Endothelial cell of umbilical vein (primary cell): ENCODE measurements at regions of chr11 and their contacts with region 1.

Region 1: GRCh38 chr11:47355283-47356128 is 3.0 kb upstream of the MYBPC3 start:
- DNase-seq: peak; percentile 92
- H3K4me3 ChIP-seq: peak overlapping the region in 1 of 3 experiments; percentile 12
- H3K27ac ChIP-seq: no peak overlapping the region
- H3K4me1 ChIP-seq: no peaks in the 10 kb centered on the region
- H3K27me3 ChIP-seq: no peaks in the 10 kb centered on the region
- CTCF ChIP-seq: peak; percentile 97 to 100
- POLR2A ChIP-seq: no peak

Region 2: DNA sequence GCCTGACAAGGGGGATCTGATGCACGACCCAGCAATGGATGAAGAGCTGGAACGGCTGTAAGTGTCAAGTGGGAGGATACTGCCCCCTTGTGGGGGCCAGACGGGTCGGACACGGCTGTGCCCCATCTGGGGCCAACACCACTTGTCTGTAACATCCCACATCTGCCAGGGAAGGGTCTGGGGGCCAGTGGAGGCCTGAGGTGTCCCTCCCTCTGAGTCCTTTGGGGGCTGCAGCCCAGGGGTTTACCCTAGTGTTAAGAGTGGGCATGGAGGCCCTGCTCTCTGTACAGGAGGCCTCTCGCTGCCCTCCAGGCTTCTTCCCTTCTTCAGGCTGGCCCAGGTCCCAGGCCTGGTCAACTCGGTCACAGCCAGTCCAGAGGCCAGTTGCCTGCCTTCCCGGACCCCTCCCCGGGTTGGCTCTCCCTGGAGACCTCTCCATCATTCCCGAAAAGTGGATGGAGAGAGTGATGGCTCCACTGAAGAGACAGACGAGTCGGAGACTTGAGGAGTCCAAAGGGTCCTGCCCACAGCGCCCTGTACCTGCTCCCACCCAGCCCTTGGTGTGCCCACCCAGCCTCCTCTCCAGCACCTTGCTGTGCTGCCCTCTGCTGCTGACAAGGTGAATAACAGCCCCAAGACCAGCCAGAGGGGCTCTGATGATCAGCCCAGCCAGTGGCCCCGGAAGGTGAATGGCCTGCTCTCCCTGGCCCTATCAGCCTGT is 194.2 kb before region 1 on chr11:
- CTCF ChIA-PET with region 1: interaction called, 7 read pairs
- POLR2A ChIA-PET with region 1: no interaction called
- dilution Hi-C with region 1: no loop called
- intact Hi-C with region 1: loop called (anchors 1 kb)
- DNase-seq: peak; percentile 52
- H3K4me3 ChIP-seq: no peak overlapping the region
- H3K27ac ChIP-seq: no peak overlapping the region
- H3K4me1 ChIP-seq: no peaks in the 10 kb centered on the region
- H3K27me3 ChIP-seq: no peaks in the 10 kb centered on the region
- CTCF ChIP-seq: peak; percentile 80 to 87
- POLR2A ChIP-seq: no peak

Region 3: GRCh38 chr11:47186076-47186936 is 169.2 kb before region 1 on chr11 and contains the start of gene PACSIN3:
- CTCF ChIA-PET with region 1: interaction called, 10 read pairs
- POLR2A ChIA-PET with region 1: no interaction called
- dilution Hi-C with region 1: no loop called
- intact Hi-C with region 1: no loop called
- DNase-seq: peak; percentile 60
- H3K4me3 ChIP-seq: peak within 1 kb of the TSS; percentile 65 to 76 (median 67)
- H3K27ac ChIP-seq: no peak within 1 kb of the TSS
- H3K4me1 ChIP-seq: peaks cover 16% of the 10 kb centered on the region
- H3K27me3 ChIP-seq: peaks cover 0 to 3% of the 10 kb centered on the region in 2 experiments
- CTCF ChIP-seq: peak in 1 of 2 donors; percentile 4
- POLR2A ChIP-seq: peak; percentile 39
- total RNA-seq, gene PACSIN3: 27.2 and 29.0 TPM in 2 replicates

Region 4: DNA sequence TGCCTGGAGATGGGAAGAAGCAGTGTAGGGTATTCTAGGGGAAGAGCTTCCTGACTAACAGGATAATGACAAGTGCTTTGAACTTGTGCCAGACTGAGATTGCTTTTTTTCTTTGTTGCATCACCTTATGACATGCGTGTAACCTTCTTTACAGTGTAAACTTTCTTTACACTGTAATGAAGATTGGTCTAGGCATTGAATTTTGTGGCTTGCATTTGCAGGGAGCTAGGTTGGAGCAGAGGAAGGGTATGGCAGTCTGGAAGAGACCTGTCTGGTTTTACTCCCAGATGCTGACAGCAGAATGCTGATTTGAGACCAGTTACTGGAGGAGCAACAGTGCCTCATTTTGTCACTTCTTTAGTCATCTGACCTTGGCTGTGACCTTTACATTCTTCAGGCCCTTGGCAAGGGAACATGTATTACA is 135.1 kb before region 1 on chr11:
- CTCF ChIA-PET with region 1: interaction called, 11 read pairs
- POLR2A ChIA-PET with region 1: no interaction called
- dilution Hi-C with region 1: no loop called
- intact Hi-C with region 1: loop called (anchors 1 kb)
- DNase-seq: peak; percentile 90
- H3K4me3 ChIP-seq: no peak overlapping the region
- H3K27ac ChIP-seq: peak overlapping the region; percentile 94
- H3K4me1 ChIP-seq: peaks cover 44% of the 10 kb centered on the region
- H3K27me3 ChIP-seq: no peaks in the 10 kb centered on the region
- CTCF ChIP-seq: no peak
- POLR2A ChIP-seq: peak; percentile 44

Region 5: GRCh38 chr11:47248664-47249377 is 106.7 kb before region 1 on chr11 and contains the start of gene ACP2:
- CTCF ChIA-PET with region 1: interaction called, 13 read pairs
- POLR2A ChIA-PET with region 1: no interaction called
- dilution Hi-C with region 1: no loop called
- intact Hi-C with region 1: no loop called
- DNase-seq: peak; percentile 88
- H3K4me3 ChIP-seq: peak within 1 kb of the TSS; percentile 50 to 74 (median 68)
- H3K27ac ChIP-seq: peak within 1 kb of the TSS; percentile 49
- H3K4me1 ChIP-seq: peaks cover 13% of the 10 kb centered on the region
- H3K27me3 ChIP-seq: no peaks in the 10 kb centered on the region
- CTCF ChIP-seq: peak; percentile 7 to 34
- POLR2A ChIP-seq: peak; percentile 92
- total RNA-seq, gene ACP2: 35.6 and 39.7 TPM in 2 replicates

Region 6: DNA sequence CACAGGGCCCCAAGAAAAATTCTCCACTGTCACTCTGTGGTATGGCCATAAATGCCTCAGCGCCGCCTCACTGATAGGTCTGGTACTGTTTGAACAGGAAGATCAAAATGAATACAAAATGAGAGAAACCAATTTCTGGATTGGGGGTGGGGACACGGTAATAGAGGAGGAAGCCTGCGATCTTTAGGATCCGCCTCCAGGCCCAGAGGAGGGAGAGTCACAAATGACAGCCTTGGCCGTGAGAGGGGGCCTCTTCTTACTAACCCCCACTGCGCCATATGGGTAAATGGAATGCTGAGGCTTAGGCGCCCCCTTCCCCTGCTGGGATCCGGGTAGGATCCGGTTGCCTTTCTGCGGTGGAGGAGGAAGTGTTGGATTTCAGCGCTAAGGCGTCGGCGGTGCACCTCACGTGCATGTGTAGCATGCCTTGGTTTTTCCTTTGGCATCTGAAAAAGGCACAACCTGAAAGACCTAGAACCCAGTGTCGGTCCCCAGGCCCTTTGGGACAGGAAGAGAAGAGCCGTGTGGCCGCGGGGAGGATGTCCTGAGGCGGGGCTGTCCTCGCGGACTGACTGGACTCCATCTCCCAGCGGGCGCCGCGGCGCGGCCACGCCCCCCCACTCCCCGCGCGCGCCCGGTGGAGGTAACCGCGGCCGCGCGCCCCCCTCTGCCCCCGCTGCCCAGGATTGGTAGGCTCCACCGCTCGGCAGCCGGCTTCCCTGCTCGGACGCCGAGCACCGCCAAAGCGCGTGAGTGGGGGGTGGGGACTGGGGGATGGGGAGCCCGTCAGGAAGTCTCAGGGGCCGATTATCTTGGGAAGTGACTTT is 86.3 kb before region 1 on chr11:
- CTCF ChIA-PET with region 1: interaction called, 10 read pairs
- POLR2A ChIA-PET with region 1: no interaction called
- dilution Hi-C with region 1: no loop called
- intact Hi-C with region 1: loop called (anchors 1 kb)
- DNase-seq: peak; percentile 85
- H3K4me3 ChIP-seq: peak overlapping the region; percentile 66 to 93 (median 70)
- H3K27ac ChIP-seq: peak overlapping the region; percentile 76
- H3K4me1 ChIP-seq: peaks cover 37% of the 10 kb centered on the region
- H3K27me3 ChIP-seq: no peaks in the 10 kb centered on the region
- CTCF ChIP-seq: no peak
- POLR2A ChIP-seq: peak; percentile 8

Region 7: DNA sequence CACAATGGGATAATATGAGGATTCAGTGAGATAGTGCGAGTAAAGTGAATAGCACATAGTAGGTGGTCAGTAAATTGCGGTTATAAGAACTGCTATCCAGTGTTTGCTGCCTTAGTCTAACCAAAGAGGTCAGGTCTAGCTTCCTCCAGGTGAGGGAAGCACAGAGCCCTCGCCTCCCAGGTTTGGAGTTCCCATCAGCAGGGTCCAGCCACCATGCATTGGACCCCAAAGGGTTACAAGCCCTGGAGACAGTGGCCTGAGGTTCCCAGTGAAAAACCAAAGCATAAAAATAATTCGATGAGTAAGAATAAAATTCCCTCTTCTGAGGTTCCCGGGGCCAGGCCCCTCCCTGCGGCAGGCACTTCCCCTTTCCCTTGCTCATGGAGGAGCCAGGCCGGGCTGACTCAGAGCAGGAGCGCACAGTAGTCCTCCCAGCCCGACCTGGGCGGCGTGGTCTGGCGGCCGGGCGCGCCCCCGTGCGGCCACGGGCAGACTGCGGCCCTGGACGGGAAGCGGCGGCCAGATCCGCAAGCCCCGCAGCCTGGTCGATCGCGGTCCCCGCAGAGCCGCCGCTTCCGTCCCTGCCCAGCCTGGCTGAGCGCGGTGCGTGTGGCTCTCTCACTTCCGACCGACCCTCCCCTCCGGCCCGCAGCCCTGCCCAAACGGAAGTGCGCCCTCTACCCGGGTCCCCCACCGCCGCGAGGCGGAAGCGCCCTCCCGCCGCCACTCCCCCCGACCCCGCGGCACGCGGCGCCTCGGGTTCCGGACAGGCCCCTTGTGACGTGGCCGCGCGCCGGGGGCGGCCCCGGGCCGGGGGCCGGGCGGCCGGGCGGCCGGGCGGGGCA is 52.5 kb after region 1 on chr11 and contains the start of gene SLC39A13:
- CTCF ChIA-PET with region 1: interaction called, 5 read pairs
- POLR2A ChIA-PET with region 1: no interaction called
- dilution Hi-C with region 1: no loop called
- intact Hi-C with region 1: loop called (anchors 1 kb)
- DNase-seq: peak; percentile 98
- H3K4me3 ChIP-seq: peak within 1 kb of the TSS; percentile 46 to 91 (median 72)
- H3K27ac ChIP-seq: peak within 1 kb of the TSS; percentile 90
- H3K4me1 ChIP-seq: peaks cover 29% of the 10 kb centered on the region
- H3K27me3 ChIP-seq: no peaks in the 10 kb centered on the region
- CTCF ChIP-seq: peak; percentile 76 to 99
- POLR2A ChIP-seq: peak; percentile 86
- total RNA-seq, gene SLC39A13: 86.3 and 91.9 TPM in 2 replicates